Spleen (tissue), 13 donors: ENCODE measurements at regions of chr19 and their contacts with region 1.

Region 1: GRCh38 chr19:9796113-9796773 is 22.6 kb downstream of the FBXL12 start:
- DNase-seq: peak; percentile 91
- H3K4me3 ChIP-seq: no peak overlapping the region
- H3K27ac ChIP-seq: peak overlapping the region in 3 of 8 donors; percentile 3 to 58 (median 42)
- H3K4me1 ChIP-seq: peaks cover under 1 to 27% (median 10%) of the 10 kb centered on the region in 6 donors
- H3K27me3 ChIP-seq: no peaks in the 10 kb centered on the region
- CTCF ChIP-seq: peak; percentile 76 to 92 (median 87)
- POLR2A ChIP-seq: no peak

Region 2: GRCh38 chr19:9140159-9140874 is 655.9 kb before region 1 on chr19 and contains the start of gene ZNF317:
- intact Hi-C with region 1: loop called (anchors 5 kb)
- DNase-seq: peak; percentile 95
- H3K4me3 ChIP-seq: peak within 1 kb of the TSS; percentile 90 to 96 (median 93)
- H3K27ac ChIP-seq: peak within 1 kb of the TSS; percentile 81 to 93 (median 90)
- H3K4me1 ChIP-seq: peaks cover 17 to 52% (median 34%) of the 10 kb centered on the region in 6 donors
- H3K27me3 ChIP-seq: no peaks in the 10 kb centered on the region
- CTCF ChIP-seq: peak in 2 of 11 experiments; percentile 26 to 28
- POLR2A ChIP-seq: peak in 1 of 3 donors; percentile 28
- total RNA-seq, gene ZNF317: 33.5 to 43.8 (median 35.6) TPM

Region 3: GRCh38 chr19:9205501-9206113 is 590.6 kb before region 1 on chr19:
- intact Hi-C with region 1: loop called (anchors 5 kb)
- DNase-seq: peak; percentile 88
- H3K4me3 ChIP-seq: peak overlapping the region in 5 of 8 donors; percentile 19 to 57 (median 25)
- H3K27ac ChIP-seq: no peak overlapping the region
- H3K4me1 ChIP-seq: peaks cover 0 to 7% (median 6%) of the 10 kb centered on the region in 6 donors
- H3K27me3 ChIP-seq: peaks cover 0 to 8% (median 0%) of the 10 kb centered on the region in 7 donors
- CTCF ChIP-seq: peak; percentile 66 to 93 (median 86)
- POLR2A ChIP-seq: no peak

Region 4: DNA sequence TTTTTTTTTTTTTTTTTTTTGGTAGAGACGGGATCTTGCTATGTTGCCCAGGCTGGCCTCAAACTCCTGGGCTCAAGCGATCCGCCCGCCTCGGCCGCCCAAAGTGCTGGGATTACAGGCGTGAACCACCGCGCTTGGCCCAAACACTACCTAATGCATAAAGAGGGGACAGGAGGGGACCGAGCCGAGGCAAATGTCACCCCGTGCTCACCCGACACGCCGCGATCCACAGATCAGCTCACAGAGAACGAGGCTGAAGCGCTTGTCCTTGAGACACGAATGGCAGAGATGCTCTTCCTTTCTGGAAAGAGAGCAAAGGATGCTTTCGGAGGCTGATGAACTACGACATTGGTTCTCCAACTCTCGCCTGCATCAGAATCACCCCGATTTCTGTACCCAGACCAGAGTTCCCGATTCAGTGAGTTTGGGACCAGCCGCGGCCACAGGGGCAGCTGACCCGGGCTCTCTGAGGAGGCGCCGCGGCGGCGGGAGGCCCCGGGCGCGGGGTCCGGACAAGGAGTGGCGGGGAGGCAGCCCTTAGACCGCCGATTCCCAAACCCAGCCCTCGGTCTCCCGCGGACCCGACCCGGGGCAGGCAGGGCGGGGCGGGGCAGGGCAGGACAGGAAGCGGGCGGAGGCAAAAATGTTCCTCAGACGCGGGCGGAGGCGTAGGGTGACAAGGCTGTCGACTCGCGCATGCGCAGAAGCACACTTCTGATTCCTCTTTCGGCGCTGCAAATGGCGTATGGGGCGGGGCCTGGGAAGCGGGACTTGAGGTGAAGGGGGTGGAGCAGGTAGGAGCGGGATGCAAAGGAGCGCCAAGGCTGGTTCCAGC is 486.9 kb before region 1 on chr19 and contains the start of gene ZNF699:
- intact Hi-C with region 1: loop called (anchors 10 kb)
- DNase-seq: peak; percentile 99
- H3K4me3 ChIP-seq: peak within 1 kb of the TSS; percentile 46 to 88 (median 72)
- H3K27ac ChIP-seq: peak within 1 kb of the TSS; percentile 93 to 99 (median 98)
- H3K4me1 ChIP-seq: peaks cover 9 to 35% (median 25%) of the 10 kb centered on the region in 6 donors
- H3K27me3 ChIP-seq: no peaks in the 10 kb centered on the region
- CTCF ChIP-seq: peak in 1 of 11 experiments; percentile 17
- POLR2A ChIP-seq: peak in 2 of 3 donors; percentile 35 to 46
- total RNA-seq, gene ZNF699: 7.7 to 16.2 (median 10.6) TPM

Region 5: GRCh38 chr19:9435279-9436268 is 360.7 kb before region 1 on chr19 and contains the start of gene ZNF266:
- intact Hi-C with region 1: loop called (anchors 10 kb)
- DNase-seq: peak; percentile 95
- H3K4me3 ChIP-seq: peak within 1 kb of the TSS; percentile 64 to 82 (median 68)
- H3K27ac ChIP-seq: peak within 1 kb of the TSS; percentile 91 to 97 (median 94)
- H3K4me1 ChIP-seq: peaks cover 11 to 54% (median 30%) of the 10 kb centered on the region in 6 donors
- H3K27me3 ChIP-seq: no peaks in the 10 kb centered on the region
- CTCF ChIP-seq: peak; percentile 85 to 98 (median 93)
- POLR2A ChIP-seq: no peak
- total RNA-seq, gene ZNF266: 26.0 to 73.0 (median 42.9) TPM

Region 6: GRCh38 chr19:9627856-9628255 is 168.4 kb before region 1 on chr19:
- intact Hi-C with region 1: loop called (anchors 2 kb)
- DNase-seq: no peak
- H3K4me3 ChIP-seq: no peak overlapping the region
- H3K27ac ChIP-seq: no peak overlapping the region
- H3K4me1 ChIP-seq: peaks cover 0 to 12% (median 1%) of the 10 kb centered on the region in 6 donors
- H3K27me3 ChIP-seq: no peaks in the 10 kb centered on the region
- CTCF ChIP-seq: no peak
- POLR2A ChIP-seq: no peak

Region 7: DNA sequence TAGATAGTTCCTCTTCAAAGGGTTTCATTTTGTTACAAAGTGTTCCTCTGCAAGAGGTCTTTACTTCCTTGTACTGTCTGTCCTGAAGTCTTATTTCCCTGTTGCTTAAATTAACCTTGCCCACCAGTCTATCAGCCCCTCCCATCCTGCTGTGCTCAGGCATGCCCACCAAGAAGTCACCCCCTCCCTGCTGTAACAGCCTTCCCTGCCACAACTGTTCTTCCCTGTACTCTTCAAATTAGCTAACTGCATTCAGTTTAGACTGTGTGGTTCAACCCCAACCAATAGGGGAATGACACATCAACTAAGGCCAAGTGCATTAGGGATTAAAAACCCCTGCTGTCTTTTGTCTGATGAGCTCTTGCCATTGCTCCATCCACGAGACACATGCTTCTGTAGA is 86.9 kb before region 1 on chr19:
- intact Hi-C with region 1: no loop called
- DNase-seq: no peak
- H3K4me3 ChIP-seq: no peak overlapping the region
- H3K27ac ChIP-seq: peak overlapping the region in 6 of 8 donors; percentile 4 to 83 (median 64)
- H3K4me1 ChIP-seq: no peaks in the 10 kb centered on the region
- H3K27me3 ChIP-seq: no peaks in the 10 kb centered on the region
- CTCF ChIP-seq: no peak
- POLR2A ChIP-seq: no peak

Region 8: GRCh38 chr19:9741476-9742171 is 54.6 kb before region 1 on chr19:
- intact Hi-C with region 1: no loop called
- DNase-seq: no peak
- H3K4me3 ChIP-seq: no peak overlapping the region
- H3K27ac ChIP-seq: no peak overlapping the region
- H3K4me1 ChIP-seq: no peaks in the 10 kb centered on the region
- H3K27me3 ChIP-seq: no peaks in the 10 kb centered on the region
- CTCF ChIP-seq: no peak
- POLR2A ChIP-seq: no peak